ENCODE measurements at regions of chr9 and their contacts with region 1.

Region 1: DNA sequence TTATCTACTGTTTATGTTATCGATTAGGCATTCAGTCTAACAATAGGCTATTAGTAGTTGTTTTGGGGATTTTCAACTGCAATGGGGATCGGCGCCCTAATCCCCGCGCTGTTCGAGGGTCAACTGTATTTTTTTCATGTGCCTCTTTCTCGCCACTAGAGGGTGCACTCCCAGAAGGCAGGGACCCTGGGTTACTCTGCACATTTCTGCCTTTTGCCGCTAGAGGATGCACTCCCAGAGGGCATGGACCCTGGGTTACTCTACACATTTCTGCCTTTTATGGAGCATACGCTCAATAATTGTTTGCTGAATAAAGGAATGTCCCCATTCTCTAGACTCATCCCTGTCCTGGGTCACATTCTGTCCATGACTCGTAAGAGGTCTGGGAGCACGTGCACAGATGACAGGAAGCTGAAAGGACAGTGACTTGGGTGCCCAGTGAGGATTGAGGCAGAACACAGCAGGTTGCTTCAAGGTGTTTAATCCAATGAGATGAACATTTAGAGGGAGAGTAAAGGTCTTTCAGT is 27.9 kb upstream of the RECK start:
- DNase-seq: no peak
- H3K4me3 ChIP-seq: no peak overlapping the region
- CTCF ChIP-seq: peak; percentile 75

Region 2: GRCh38 chr9:35945341-35946018 is 63.4 kb before region 1 on chr9:
- CTCF ChIA-PET with region 1: interaction called, 21 read pairs
- POLR2A ChIA-PET with region 1: no interaction called
- DNase-seq: no peak
- H3K4me3 ChIP-seq: no peak overlapping the region
- CTCF ChIP-seq: peak; percentile 86

Region 3: GRCh38 chr9:35962126-35962906 is 46.5 kb before region 1 on chr9:
- CTCF ChIA-PET with region 1: interaction called, 342 read pairs
- POLR2A ChIA-PET with region 1: no interaction called
- DNase-seq: peak; percentile 46
- H3K4me3 ChIP-seq: peak overlapping the region; percentile 45
- CTCF ChIP-seq: no peak

Region 4: DNA sequence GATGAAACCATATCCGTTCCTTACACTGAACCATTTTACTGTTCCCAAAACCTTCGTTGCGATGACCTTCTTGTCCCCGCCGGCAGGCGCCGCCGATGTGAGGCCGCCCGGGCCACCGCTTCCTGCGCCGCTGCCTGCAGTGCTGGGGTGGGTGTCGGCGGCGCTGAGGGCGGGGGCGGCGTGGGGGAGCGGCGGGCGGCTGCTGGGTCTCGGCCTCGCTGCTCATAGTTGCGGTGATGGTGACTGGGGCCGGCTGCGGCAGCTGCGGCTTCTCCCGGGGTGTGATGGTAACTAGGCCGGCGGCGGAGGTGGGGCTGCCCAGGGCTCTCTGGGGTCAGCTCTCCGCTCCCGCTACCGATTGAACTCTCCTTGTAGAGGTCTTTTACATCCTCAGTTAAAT is 36.7 kb before region 1 on chr9:
- CTCF ChIA-PET with region 1: interaction called, 17 read pairs
- POLR2A ChIA-PET with region 1: no interaction called
- DNase-seq: no peak
- H3K4me3 ChIP-seq: no peak overlapping the region
- CTCF ChIP-seq: no peak

Region 5: DNA sequence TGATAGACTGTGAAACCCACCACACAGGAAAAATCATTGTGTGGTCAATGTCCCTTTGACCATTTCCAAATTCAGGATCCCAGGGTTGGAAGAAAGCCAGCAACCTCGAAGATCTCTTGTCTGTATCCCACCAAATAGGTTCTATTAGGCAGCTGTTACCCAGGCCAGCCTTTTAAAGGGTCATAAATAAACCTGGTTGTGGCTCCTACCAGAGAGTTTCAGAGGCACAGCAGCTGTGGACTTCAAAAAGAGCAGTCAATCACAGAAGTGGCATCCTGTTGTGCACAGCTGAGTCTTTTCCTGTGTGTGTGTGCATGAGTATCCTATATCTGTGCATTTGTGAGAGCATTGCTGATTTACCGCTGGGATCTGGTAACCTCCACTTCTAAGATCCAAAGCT is 27.1 kb before region 1 on chr9:
- CTCF ChIA-PET with region 1: interaction called, 41 read pairs
- POLR2A ChIA-PET with region 1: no interaction called
- DNase-seq: no peak
- H3K4me3 ChIP-seq: no peak overlapping the region
- CTCF ChIP-seq: no peak

Region 6: DNA sequence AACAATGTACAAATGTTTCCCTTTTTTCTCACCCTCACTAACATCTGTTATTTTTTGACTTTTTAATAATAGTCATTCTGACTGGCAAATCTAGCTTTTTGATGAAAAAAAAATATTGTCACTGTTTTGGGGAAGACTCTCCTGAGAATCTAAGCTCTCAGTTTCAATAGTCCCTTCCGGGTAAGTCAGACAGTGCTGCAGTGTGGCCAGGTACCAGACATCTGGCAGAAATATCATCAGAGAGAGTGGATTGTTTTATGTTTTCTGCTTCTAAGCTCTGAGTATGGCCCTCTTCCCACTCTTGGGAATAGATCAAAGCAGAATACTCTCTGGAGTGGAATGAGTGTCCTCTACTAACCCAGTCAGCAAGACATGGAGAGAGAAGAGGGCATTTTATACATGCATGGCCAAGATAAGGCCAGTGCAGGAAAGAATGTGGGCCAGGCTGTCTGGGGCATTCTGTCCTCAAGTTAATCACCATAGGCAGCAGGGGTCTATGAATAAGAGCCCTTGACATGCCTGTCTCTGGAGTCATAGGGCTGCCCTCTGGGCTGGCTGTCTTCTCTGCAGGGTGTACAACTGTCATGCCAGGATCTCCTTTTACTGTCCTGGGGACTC is 12.4 kb before region 1 on chr9:
- CTCF ChIA-PET with region 1: interaction called, 51 read pairs
- POLR2A ChIA-PET with region 1: no interaction called
- DNase-seq: no peak
- H3K4me3 ChIP-seq: no peak overlapping the region
- CTCF ChIP-seq: no peak